ENCODE measurements at regions of chr1 and their contacts with region 1.

Region 1: GRCh38 chr1:167066333-167067122 is 23.6 kb downstream of the GPA33 start:
- DNase-seq: peak; percentile 83
- ATAC-seq: peak; percentile 96
- H3K4me3 Mint-ChIP-seq: no peak overlapping the region
- H3K27ac Mint-ChIP-seq: no peak overlapping the region
- H3K4me1 Mint-ChIP-seq: no peaks in the 10 kb centered on the region
- H3K27me3 Mint-ChIP-seq: peaks cover 8% of the 10 kb centered on the region

Region 2: DNA sequence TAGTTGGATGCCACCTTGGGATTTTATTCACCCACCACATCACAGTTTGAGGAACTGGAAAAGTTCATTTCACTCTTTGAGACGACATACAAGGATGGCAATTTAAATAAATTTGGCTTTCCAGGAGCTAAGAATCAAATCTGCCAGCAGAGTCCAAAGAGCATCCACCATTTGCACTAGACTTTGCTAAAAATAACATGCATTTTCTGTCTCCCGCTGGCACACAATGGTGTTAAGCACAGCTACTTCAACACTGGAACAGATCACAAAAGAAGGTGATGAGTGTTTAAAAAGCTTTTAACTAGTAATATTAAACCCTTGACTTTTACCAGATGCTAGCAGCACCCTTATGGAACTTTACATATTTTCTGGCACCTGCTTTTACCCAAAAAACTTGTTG is 32.9 kb before region 1 on chr1:
- CTCF ChIA-PET with region 1: no interaction called
- POLR2A ChIA-PET with region 1: no interaction called
- DNase-seq: no peak
- ATAC-seq: no peak
- H3K4me3 Mint-ChIP-seq: no peak overlapping the region
- H3K27ac Mint-ChIP-seq: no peak overlapping the region
- H3K4me1 Mint-ChIP-seq: no peaks in the 10 kb centered on the region
- H3K27me3 Mint-ChIP-seq: peaks cover 2% of the 10 kb centered on the region

Region 3: GRCh38 chr1:167109125-167109524 is 42.6 kb after region 1 on chr1:
- CTCF ChIA-PET with region 1: interaction called, 15 read pairs
- POLR2A ChIA-PET with region 1: no interaction called
- DNase-seq: no peak
- ATAC-seq: peak; percentile 53
- H3K4me3 Mint-ChIP-seq: no peak overlapping the region
- H3K27ac Mint-ChIP-seq: peak overlapping the region; percentile 62
- H3K4me1 Mint-ChIP-seq: peaks cover 48% of the 10 kb centered on the region
- H3K27me3 Mint-ChIP-seq: peaks cover 20% of the 10 kb centered on the region

Region 4: DNA sequence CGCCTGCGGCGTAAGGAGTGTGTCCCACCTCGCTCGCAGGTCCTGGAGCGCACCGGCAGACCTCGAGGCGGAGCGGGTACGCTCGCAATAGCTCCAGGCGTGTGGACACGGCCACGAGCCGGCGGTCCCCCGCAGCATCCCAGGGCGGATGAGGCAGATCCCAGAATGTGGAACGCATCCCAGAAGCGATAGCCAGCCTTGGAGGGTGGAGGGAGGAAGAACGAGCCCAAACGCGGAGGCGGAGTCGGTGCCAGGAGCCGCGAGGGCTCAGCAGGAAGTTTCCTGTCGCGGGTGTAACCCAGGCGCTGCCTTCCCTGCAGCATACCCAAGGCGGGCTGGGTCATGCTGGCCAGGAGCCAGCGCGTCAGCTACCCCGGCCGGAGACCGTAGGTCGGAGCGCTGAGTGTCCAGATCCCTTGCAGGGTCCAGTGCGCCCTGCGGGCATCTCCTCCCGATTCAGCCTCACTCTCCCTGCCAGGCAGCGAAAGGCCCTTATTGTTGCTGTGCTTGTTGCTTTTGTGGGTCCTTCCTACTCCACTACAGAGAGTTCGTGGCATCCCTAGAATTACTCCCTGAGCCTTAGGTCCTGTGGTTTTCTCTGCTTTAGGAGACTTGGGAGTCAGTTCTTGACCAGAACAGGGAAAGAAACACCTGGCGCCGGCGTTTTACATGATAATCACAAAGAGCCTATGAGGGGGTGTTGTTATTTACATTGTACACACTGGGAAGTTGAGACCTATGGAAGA is 55.0 kb after region 1 on chr1:
- CTCF ChIA-PET with region 1: interaction called, 57 read pairs
- POLR2A ChIA-PET with region 1: no interaction called
- DNase-seq: peak; percentile 33
- ATAC-seq: peak; percentile 88
- H3K4me3 Mint-ChIP-seq: peak overlapping the region; percentile 74
- H3K27ac Mint-ChIP-seq: no peak overlapping the region
- H3K4me1 Mint-ChIP-seq: peaks cover 9% of the 10 kb centered on the region
- H3K27me3 Mint-ChIP-seq: peaks cover 7% of the 10 kb centered on the region